Heart right ventricle (tissue), 16 donors: ENCODE measurements at regions of chr1 and their contacts with region 1.

Region 1: DNA sequence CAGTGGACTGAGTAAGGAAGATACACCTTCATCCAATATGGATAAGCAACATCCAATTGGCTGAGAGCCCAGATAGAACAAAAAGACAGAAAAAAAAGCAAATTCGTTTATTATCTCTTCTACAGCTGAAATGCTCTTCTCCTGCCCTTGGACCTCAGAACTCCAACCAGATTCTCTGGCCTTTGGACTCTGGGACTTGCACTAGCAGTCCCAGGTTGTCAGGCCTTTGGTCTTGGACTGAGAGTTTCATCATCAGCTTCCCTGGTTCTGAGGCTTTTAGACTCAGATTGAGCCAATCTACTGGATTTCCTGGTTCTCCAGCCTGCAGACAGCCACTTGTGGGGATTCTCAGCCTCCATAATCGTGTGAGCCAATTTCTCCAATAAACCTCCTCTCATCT is 926.8 kb downstream of the PLA2G4A start:
- DNase-seq: no peak
- ATAC-seq: no peak
- H3K4me3 ChIP-seq: no peak overlapping the region
- H3K27ac ChIP-seq: no peak overlapping the region
- H3K4me1 ChIP-seq: no peaks in the 10 kb centered on the region
- H3K27me3 ChIP-seq: no peaks in the 10 kb centered on the region
- CTCF ChIP-seq: no peak

Region 2: DNA sequence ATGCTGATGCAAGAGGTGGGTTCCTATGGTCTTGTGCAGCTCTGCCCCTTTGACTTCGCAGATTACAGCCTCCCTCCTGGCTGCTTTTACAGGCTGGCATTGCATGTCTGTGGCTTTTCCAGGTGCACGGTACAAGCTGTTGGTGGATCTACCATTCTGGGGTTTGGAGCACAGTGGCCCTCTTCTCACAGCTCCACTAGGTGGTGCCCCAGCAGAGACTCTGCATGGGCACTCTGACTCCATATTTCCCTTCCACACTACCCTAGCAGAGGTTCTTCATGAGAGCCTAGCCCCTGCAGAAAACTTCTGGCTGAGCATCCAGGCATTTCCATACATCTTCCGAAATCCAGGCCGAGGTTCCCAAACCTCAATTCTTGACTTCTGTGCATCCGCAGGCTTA is 62.2 kb after region 1 on chr1:
- intact Hi-C with region 1: loop called in 1 of 10 experiments (anchors 2 kb)
- DNase-seq: no peak
- ATAC-seq: no peak
- H3K4me3 ChIP-seq: no peak overlapping the region
- H3K27ac ChIP-seq: no peak overlapping the region
- H3K4me1 ChIP-seq: no peaks in the 10 kb centered on the region
- H3K27me3 ChIP-seq: no peaks in the 10 kb centered on the region
- CTCF ChIP-seq: no peak

Region 3: GRCh38 chr1:187842396-187843165 is 87.0 kb after region 1 on chr1:
- intact Hi-C with region 1: no loop called
- DNase-seq: peak in 1 of 2 donors; percentile 5
- ATAC-seq: no peak
- H3K4me3 ChIP-seq: no peak overlapping the region
- H3K27ac ChIP-seq: peak overlapping the region in 1 of 10 donors; percentile 34
- H3K4me1 ChIP-seq: peaks cover 0 to 14% (median 6%) of the 10 kb centered on the region in 9 donors
- H3K27me3 ChIP-seq: no peaks in the 10 kb centered on the region
- CTCF ChIP-seq: no peak